CD14-positive monocyte (primary cell): ENCODE measurements at regions of chr1 and their contacts with region 1.

Region 1: GRCh38 chr1:111222308-111223125 is 5.0 kb upstream of the CHI3L2 start:
- DNase-seq: peak; percentile 50 to 74 (median 62)
- H3K4me3 ChIP-seq: peak overlapping the region in 1 of 3 experiments; percentile 52
- H3K4me3 Mint-ChIP-seq: peak overlapping the region in 1 of 2 donors; percentile 81
- H3K27ac ChIP-seq: peak overlapping the region; percentile 43 to 62
- H3K27ac Mint-ChIP-seq: peak overlapping the region; percentile 76 to 89 (median 84)
- H3K4me1 ChIP-seq: peaks cover 60 to 67% of the 10 kb centered on the region in 2 donors
- H3K4me1 Mint-ChIP-seq: peaks cover 69% of the 10 kb centered on the region
- H3K27me3 ChIP-seq: no peaks in the 10 kb centered on the region
- H3K27me3 Mint-ChIP-seq: peaks cover 0 to 8% (median 0%) of the 10 kb centered on the region in 3 donors
- CTCF ChIP-seq: peak; percentile 92

Region 2: DNA sequence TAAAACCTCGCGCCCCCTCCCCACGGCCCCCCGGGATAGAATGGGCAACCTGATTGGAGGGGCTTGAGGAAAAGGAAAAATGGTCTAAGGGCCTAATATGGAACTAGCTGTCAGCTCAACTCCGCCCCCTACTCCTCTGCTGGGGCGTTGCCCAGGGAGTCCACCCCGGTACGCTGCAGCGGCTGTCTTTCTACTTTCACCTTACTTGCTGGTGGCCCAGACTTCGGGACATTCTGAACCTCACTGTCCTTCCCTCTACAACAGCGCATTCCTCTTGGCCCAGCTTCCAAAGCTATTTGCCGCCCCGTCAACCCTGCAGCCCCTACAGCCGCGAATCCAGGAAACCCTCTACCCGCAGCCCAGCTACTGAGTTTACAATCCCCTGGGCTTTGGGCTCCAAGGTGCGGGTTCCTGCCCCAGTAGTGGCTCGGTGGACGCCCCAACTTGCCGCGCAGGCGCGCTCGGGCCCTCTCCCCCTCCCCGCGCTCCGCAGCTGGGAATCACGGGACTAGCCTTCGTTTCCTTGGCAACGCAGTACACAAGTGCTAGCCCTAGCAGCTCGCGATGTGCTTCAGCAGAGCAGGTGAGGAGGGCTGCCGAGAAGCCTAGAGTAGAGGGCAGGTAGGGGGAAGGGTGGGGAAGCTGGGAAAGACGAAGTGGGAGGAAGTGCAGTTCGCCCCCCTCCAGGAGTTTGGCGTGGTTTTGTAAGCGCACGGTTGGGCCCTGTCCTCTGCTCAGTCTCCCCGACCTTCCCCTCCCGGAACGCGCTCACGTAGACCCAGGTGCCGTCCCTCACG is 123.8 kb after region 1 on chr1:
- intact Hi-C with region 1: loop called in 1 of 2 experiments (anchors 10 kb)
- DNase-seq: peak; percentile 75 to 83 (median 80)
- H3K4me3 ChIP-seq: peak overlapping the region; percentile 46 to 75 (median 66)
- H3K4me3 Mint-ChIP-seq: peak overlapping the region; percentile 86 to 96
- H3K27ac ChIP-seq: peak overlapping the region; percentile 12 to 21
- H3K27ac Mint-ChIP-seq: peak overlapping the region; percentile 67 to 90 (median 86)
- H3K4me1 ChIP-seq: peaks cover 8 to 12% of the 10 kb centered on the region in 2 donors
- H3K4me1 Mint-ChIP-seq: peaks cover 12% of the 10 kb centered on the region
- H3K27me3 ChIP-seq: peaks cover 0 to 13% of the 10 kb centered on the region in 2 donors
- H3K27me3 Mint-ChIP-seq: peaks cover 2 to 30% (median 19%) of the 10 kb centered on the region in 3 donors
- CTCF ChIP-seq: no peak

Region 3: GRCh38 chr1:111399792-111400610 is 177.5 kb after region 1 on chr1:
- intact Hi-C with region 1: loop called in 1 of 2 experiments (anchors 10 kb)
- DNase-seq: peak; percentile 14 to 52 (median 35)
- H3K4me3 ChIP-seq: no peak overlapping the region
- H3K4me3 Mint-ChIP-seq: no peak overlapping the region
- H3K27ac ChIP-seq: no peak overlapping the region
- H3K27ac Mint-ChIP-seq: no peak overlapping the region
- H3K4me1 ChIP-seq: no peaks in the 10 kb centered on the region
- H3K4me1 Mint-ChIP-seq: peaks cover 3% of the 10 kb centered on the region
- H3K27me3 ChIP-seq: peaks cover 0 to 5% of the 10 kb centered on the region in 2 donors
- H3K27me3 Mint-ChIP-seq: peaks cover 14 to 21% (median 18%) of the 10 kb centered on the region in 3 donors
- CTCF ChIP-seq: peak; percentile 79

Region 4: GRCh38 chr1:111417755-111418154 is 195.2 kb after region 1 on chr1:
- intact Hi-C with region 1: no loop called
- DNase-seq: no peak
- H3K4me3 ChIP-seq: no peak overlapping the region
- H3K4me3 Mint-ChIP-seq: no peak overlapping the region
- H3K27ac ChIP-seq: no peak overlapping the region
- H3K27ac Mint-ChIP-seq: no peak overlapping the region
- H3K4me1 ChIP-seq: no peaks in the 10 kb centered on the region
- H3K4me1 Mint-ChIP-seq: peaks cover 7% of the 10 kb centered on the region
- H3K27me3 ChIP-seq: no peaks in the 10 kb centered on the region
- H3K27me3 Mint-ChIP-seq: peaks cover 0 to 3% (median 0%) of the 10 kb centered on the region in 3 donors
- CTCF ChIP-seq: no peak